Ascending aorta (tissue), 2 donors: ENCODE measurements at regions of chr20 and their contacts with region 1.

Region 1: GRCh38 chr20:63520504-63520933 is at the start of gene PPDPF:
- DNase-seq: peak in 1 of 2 donors; percentile 88
- H3K4me3 ChIP-seq: peak within 1 kb of the TSS; percentile 80 to 97
- H3K27ac ChIP-seq: peak within 1 kb of the TSS; percentile 83 to 90
- H3K4me1 ChIP-seq: peaks cover 16 to 18% of the 10 kb centered on the region in 2 donors
- H3K27me3 ChIP-seq: no peaks in the 10 kb centered on the region
- CTCF ChIP-seq: no peak
- total RNA-seq, gene PPDPF: 242 TPM

Region 2: DNA sequence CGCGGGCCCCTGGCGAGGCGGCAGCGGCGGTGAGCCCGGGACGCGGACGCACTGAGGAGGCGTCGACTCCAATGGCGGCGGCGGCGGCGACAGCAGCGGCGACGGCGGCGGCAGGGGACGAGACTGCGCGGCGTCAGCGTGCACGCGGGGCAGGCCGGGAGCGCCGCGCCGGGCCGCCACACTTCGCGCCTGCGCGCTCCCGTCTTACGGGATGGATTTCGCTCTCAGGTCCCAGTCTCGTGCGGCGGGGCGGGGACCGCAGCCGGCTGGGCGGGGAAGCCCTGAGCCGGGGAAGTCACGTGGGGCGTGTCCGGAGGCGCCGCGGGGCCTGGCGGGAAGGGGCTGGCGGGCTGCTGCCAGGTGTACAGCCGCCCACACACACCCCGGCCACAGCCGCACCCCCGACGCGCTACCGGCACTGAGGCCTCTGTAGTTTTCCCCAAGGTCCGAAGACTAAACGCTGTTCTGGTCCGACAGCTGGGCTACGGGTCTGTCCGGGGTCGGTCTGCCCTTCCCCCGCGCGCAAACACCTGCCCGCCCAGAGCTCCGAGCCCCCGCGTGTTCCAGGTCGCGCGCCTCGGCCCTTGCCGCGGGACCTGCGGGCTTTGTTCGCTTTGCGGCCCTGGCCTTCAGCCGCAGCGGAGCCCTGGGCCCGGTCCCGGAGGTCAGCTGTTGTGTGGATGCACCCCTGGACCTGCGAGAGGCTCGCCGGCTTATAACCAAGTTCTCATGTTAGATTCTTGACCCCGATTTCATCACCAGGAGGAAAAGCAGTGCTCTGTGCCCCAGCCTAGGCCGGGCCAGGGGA is 304.3 kb before region 1 on chr20 and contains the start of gene YTHDF1:
- intact Hi-C with region 1: loop called (anchors 10 kb)
- DNase-seq: peak; percentile 87 to 97
- H3K4me3 ChIP-seq: peak within 1 kb of the TSS; percentile 98
- H3K27ac ChIP-seq: peak within 1 kb of the TSS; percentile 73 to 84
- H3K4me1 ChIP-seq: peaks cover 0 to 18% of the 10 kb centered on the region in 2 donors
- H3K27me3 ChIP-seq: no peaks in the 10 kb centered on the region
- CTCF ChIP-seq: no peak
- total RNA-seq, gene YTHDF1: 14.2 TPM

Region 3: DNA sequence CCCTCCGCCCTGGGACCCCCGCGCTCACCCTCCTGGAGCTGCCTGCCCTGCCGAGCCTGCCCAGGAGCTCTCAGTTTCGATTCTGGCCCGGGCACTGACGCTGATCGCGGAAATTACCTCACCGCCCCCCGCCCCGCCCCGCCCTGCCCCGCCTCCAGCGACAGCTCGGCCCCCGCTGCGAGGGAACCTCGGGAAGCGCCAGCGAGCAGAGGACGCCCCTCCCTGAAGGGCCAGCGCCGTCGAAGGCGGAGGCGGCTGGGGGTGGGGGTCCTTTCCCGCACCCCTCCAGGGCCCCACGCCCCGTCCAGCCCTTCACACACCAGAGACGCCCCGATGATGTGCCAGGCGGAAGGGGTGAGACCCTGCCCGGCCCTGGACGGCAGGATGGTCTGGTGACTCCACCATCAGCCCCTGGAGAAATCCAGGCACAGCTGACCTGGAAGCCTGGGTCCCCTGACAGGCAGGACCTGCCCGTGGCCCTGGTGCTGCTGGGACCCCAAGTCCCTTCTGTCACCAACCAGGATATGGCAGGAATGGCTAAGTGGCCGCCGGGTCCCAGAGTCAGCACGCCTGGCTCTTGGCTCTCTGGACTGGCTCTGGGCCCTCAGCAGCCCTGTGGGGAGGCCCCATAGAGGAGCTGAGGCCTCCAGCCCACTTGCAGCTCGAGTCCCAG is 53.8 kb after region 1 on chr20 and contains the start of gene HELZ2:
- intact Hi-C with region 1: loop called (anchors 5 kb)
- DNase-seq: peak in 1 of 2 donors; percentile 86
- H3K4me3 ChIP-seq: peak within 1 kb of the TSS; percentile 70 to 92
- H3K27ac ChIP-seq: peak within 1 kb of the TSS; percentile 62 to 68
- H3K4me1 ChIP-seq: peaks cover 8 to 9% of the 10 kb centered on the region in 2 donors
- H3K27me3 ChIP-seq: no peaks in the 10 kb centered on the region
- CTCF ChIP-seq: no peak
- total RNA-seq, gene HELZ2: 58.1 TPM

Region 4: GRCh38 chr20:63894358-63895201 is 374.1 kb after region 1 on chr20 and contains the start of gene DNAJC5:
- intact Hi-C with region 1: loop called (anchors 1 kb)
- DNase-seq: peak; percentile 64 to 96
- H3K4me3 ChIP-seq: peak within 1 kb of the TSS; percentile 77 to 91
- H3K27ac ChIP-seq: peak within 1 kb of the TSS; percentile 62 to 63
- H3K4me1 ChIP-seq: peaks cover 11 to 12% of the 10 kb centered on the region in 2 donors
- H3K27me3 ChIP-seq: no peaks in the 10 kb centered on the region
- CTCF ChIP-seq: no peak
- total RNA-seq, gene DNAJC5: 42.9 TPM

Region 5: GRCh38 chr20:63980806-63981728 is 460.5 kb after region 1 on chr20 and contains the start of gene PRPF6:
- intact Hi-C with region 1: loop called (anchors 5 kb)
- DNase-seq: peak; percentile 71 to 95
- H3K4me3 ChIP-seq: peak within 1 kb of the TSS; percentile 83 to 92
- H3K27ac ChIP-seq: peak within 1 kb of the TSS; percentile 81 to 89
- H3K4me1 ChIP-seq: peaks cover 18 to 26% of the 10 kb centered on the region in 2 donors
- H3K27me3 ChIP-seq: no peaks in the 10 kb centered on the region
- CTCF ChIP-seq: peak; percentile 78 to 88 (median 84)
- total RNA-seq, gene PRPF6: 33.5 TPM